PC-9 (cell line): ENCODE measurements at regions of chr4 and their contacts with region 1.

Region 1: DNA sequence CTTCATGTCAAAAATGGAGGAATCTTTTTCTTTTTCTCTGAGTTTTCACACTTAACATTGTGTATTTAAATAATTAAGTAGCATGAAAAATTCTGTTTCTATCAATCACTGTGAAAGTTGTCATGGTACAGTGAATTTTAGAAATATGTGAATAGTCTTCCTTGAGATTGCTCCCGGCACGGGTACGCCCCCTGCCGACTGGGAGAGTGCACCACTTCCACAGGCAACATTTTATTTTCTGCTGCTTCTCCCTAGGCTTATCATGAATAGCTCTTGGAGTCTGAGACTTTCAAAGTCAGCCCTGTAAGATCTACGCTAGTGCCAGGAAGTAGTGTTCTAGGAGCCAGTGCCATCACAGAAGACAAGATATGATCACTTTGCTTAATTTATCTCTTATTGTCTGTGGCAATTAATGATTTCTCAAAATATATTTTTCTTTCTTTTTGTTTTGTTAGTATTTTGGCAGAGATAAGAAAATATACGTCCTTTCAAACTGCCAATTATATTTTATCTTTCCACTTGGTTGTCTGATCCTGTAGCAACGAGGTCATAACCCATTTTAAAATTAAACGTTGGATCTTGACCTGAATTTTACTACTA is 763.8 kb upstream of the AADAT start:
- DNase-seq: peak in 1 of 2 experiments; percentile 48
- H3K4me3 ChIP-seq: no peak overlapping the region
- H3K27ac ChIP-seq: no peak overlapping the region
- H3K4me1 ChIP-seq: no peaks in the 10 kb centered on the region
- H3K27me3 ChIP-seq: no peaks in the 10 kb centered on the region
- CTCF ChIP-seq: peak; percentile 74

Region 2: GRCh38 chr4:170138580-170139194 is 714.8 kb before region 1 on chr4:
- CTCF ChIA-PET with region 1: no interaction called
- POLR2A ChIA-PET with region 1: no interaction called
- intact Hi-C with region 1: loop called (anchors 5 kb)
- DNase-seq: peak in 1 of 2 experiments; percentile 57
- H3K4me3 ChIP-seq: no peak overlapping the region
- H3K27ac ChIP-seq: no peak overlapping the region
- H3K4me1 ChIP-seq: no peaks in the 10 kb centered on the region
- H3K27me3 ChIP-seq: no peaks in the 10 kb centered on the region
- CTCF ChIP-seq: peak; percentile 77

Region 3: DNA sequence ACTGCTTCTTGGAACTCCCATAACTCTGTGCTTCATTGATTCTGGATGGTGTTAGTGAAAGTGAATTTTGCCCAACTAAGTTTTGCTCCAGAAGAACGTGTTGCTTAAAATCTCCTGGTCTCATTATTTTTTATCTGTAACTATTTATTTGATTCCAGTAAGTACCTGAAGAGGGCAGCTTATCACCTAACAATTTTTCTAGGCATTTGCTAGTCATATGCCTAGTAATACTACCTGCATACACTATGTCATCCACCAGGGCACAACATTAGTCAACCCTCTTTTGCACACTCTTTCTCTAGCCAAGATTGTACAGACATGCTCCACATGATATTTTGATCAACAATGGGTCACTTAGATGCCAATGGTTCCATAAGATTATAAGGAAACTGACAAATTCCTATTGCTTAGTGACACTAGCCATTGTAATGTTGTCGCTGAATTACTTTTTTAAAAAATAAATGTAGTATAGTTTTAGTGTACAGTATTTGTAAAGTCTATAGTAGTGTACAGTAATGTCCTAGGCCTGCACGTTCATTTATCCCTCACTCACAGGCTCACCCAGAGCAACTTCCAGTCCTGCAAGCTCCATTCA is 263.8 kb before region 1 on chr4:
- CTCF ChIA-PET with region 1: no interaction called
- POLR2A ChIA-PET with region 1: no interaction called
- intact Hi-C with region 1: loop called (anchors 1 kb)
- DNase-seq: no peak
- H3K4me3 ChIP-seq: no peak overlapping the region
- H3K27ac ChIP-seq: no peak overlapping the region
- H3K4me1 ChIP-seq: no peaks in the 10 kb centered on the region
- H3K27me3 ChIP-seq: no peaks in the 10 kb centered on the region
- CTCF ChIP-seq: peak; percentile 45

Region 4: DNA sequence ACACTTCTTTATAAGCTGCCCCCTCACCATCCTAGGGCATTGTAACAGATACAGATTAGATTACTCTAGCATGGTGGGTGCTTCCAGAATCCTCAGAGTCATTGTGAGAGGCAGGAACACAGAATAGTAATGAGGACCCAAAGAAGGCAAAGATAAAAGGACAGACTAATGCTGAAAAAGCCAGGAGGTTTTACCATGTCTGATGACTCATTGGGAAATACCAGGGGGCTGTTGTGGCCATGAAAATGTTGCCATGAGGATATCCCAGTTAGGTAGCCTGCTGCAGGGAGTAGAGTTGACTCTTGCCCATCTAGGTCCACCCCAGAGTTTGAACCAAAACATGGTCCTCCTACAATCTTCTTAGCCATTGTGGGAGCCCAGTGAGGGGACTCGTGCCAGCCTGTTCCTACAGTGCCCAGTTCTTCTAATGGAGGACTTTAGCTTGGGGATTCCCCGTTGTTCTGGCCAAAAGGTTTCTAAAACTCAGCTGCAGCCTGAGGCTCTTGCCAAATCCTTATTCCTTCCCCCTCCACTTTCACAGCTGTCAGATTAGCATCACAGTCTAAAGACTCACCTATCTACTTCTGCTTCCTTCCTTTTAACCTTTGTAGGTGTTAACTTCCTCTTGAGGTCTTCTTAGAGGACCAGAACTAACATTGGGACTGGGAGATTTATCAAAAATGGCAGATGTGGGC is 177.8 kb before region 1 on chr4:
- CTCF ChIA-PET with region 1: no interaction called
- POLR2A ChIA-PET with region 1: no interaction called
- intact Hi-C with region 1: no loop called
- DNase-seq: no peak
- H3K4me3 ChIP-seq: no peak overlapping the region
- H3K27ac ChIP-seq: no peak overlapping the region
- H3K4me1 ChIP-seq: no peaks in the 10 kb centered on the region
- H3K27me3 ChIP-seq: no peaks in the 10 kb centered on the region
- CTCF ChIP-seq: no peak